ENCODE measurements at regions of chr3 and their contacts with region 1.

Region 1: GRCh38 chr3:179872842-179873241 is 163.9 kb downstream of the PEX5L start:
- DNase-seq: no peak
- ATAC-seq: no peak
- H3K4me3 ChIP-seq: no peak overlapping the region
- H3K4me3 Mint-ChIP-seq: no peak overlapping the region
- H3K27ac ChIP-seq: no peak overlapping the region
- H3K27ac Mint-ChIP-seq: no peak overlapping the region
- H3K4me1 ChIP-seq: no peaks in the 10 kb centered on the region
- H3K4me1 Mint-ChIP-seq: no peaks in the 10 kb centered on the region
- H3K27me3 ChIP-seq: peaks cover 0 to 3% of the 10 kb centered on the region in 2 experiments
- H3K27me3 Mint-ChIP-seq: peaks cover 0 to 3% of the 10 kb centered on the region in 2 donors

Region 2: DNA sequence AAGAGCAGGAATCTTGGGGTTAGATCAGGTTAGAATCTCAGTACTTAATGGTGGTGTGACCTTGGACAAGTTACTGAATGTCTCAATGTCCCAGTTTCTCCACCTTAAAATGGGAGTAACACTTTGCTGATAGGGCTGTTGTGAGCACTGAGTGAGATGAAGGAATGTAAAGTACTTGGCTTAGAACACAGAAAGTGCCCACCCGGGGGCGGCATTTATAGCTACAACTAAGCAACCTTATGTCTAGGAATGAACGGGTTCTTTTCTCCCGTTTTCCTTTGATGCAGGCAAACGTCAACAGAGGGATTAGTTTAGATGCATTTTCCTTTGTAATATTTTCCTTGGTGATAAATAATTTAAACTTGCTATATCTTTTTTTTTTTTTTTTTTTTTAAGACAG is 43.4 kb before region 1 on chr3:
- CTCF ChIA-PET with region 1: no interaction called
- POLR2A ChIA-PET with region 1: interaction called in 1 of 2 experiments, 12 read pairs
- DNase-seq: no peak
- ATAC-seq: no peak
- H3K4me3 ChIP-seq: no peak overlapping the region
- H3K4me3 Mint-ChIP-seq: no peak overlapping the region
- H3K27ac ChIP-seq: no peak overlapping the region
- H3K27ac Mint-ChIP-seq: no peak overlapping the region
- H3K4me1 ChIP-seq: no peaks in the 10 kb centered on the region
- H3K4me1 Mint-ChIP-seq: no peaks in the 10 kb centered on the region
- H3K27me3 ChIP-seq: no peaks in the 10 kb centered on the region
- H3K27me3 Mint-ChIP-seq: peaks cover 0 to 13% of the 10 kb centered on the region in 2 donors

Region 3: GRCh38 chr3:179907784-179908482 is 35.1 kb after region 1 on chr3:
- CTCF ChIA-PET with region 1: no interaction called
- POLR2A ChIA-PET with region 1: no interaction called
- DNase-seq: no peak
- ATAC-seq: no peak
- H3K4me3 ChIP-seq: no peak overlapping the region
- H3K4me3 Mint-ChIP-seq: no peak overlapping the region
- H3K27ac ChIP-seq: no peak overlapping the region
- H3K27ac Mint-ChIP-seq: no peak overlapping the region
- H3K4me1 ChIP-seq: no peaks in the 10 kb centered on the region
- H3K4me1 Mint-ChIP-seq: no peaks in the 10 kb centered on the region
- H3K27me3 ChIP-seq: no peaks in the 10 kb centered on the region
- H3K27me3 Mint-ChIP-seq: peaks cover 14% of the 10 kb centered on the region in 2 donors

Region 4: DNA sequence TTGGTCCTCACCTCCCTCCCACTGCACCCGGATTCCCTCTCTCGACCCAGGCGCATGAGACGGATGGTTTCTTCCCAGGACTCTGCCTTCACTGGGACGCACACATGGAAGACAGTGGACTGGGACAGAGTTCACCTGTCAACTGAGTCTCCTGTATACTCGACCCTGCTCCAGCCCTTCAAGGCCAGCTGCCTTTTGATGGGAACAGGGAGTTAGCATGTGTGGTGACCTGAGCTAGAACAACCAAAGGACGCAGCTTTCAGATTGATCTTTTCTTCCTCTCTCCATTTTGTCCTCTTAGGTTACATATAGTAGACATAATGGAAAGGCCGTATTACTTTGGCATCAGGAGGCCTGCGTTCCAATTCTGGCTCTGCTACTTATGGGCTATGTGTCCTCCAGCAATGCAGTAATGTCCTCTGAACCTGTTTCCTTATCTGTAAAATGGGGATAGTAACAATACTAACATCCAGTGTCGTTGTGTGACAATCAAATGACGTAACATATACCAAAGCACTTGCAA is 69.8 kb after region 1 on chr3:
- CTCF ChIA-PET with region 1: no interaction called
- POLR2A ChIA-PET with region 1: no interaction called
- DNase-seq: no peak
- ATAC-seq: no peak
- H3K4me3 ChIP-seq: peak overlapping the region in 1 of 2 donors; percentile 60
- H3K4me3 Mint-ChIP-seq: peak overlapping the region in 1 of 3 donors; percentile 37
- H3K27ac ChIP-seq: no peak overlapping the region
- H3K27ac Mint-ChIP-seq: no peak overlapping the region
- H3K4me1 ChIP-seq: no peaks in the 10 kb centered on the region
- H3K4me1 Mint-ChIP-seq: peaks cover 0 to 5% (median 3%) of the 10 kb centered on the region in 3 donors
- H3K27me3 ChIP-seq: peaks cover 0 to 2% of the 10 kb centered on the region in 2 experiments
- H3K27me3 Mint-ChIP-seq: peaks cover 19% of the 10 kb centered on the region in 2 donors

Region 5: GRCh38 chr3:180358179-180358578 is 485.3 kb after region 1 on chr3:
- CTCF ChIA-PET with region 1: no interaction called
- POLR2A ChIA-PET with region 1: no interaction called
- DNase-seq: no peak
- ATAC-seq: no peak
- H3K4me3 ChIP-seq: no peak overlapping the region
- H3K4me3 Mint-ChIP-seq: no peak overlapping the region
- H3K27ac ChIP-seq: no peak overlapping the region
- H3K27ac Mint-ChIP-seq: no peak overlapping the region
- H3K4me1 ChIP-seq: no peaks in the 10 kb centered on the region
- H3K4me1 Mint-ChIP-seq: no peaks in the 10 kb centered on the region
- H3K27me3 ChIP-seq: no peaks in the 10 kb centered on the region
- H3K27me3 Mint-ChIP-seq: no peaks in the 10 kb centered on the region